A549 (cell line): ENCODE measurements at regions of chr10 and their contacts with region 1.

Region 1: DNA sequence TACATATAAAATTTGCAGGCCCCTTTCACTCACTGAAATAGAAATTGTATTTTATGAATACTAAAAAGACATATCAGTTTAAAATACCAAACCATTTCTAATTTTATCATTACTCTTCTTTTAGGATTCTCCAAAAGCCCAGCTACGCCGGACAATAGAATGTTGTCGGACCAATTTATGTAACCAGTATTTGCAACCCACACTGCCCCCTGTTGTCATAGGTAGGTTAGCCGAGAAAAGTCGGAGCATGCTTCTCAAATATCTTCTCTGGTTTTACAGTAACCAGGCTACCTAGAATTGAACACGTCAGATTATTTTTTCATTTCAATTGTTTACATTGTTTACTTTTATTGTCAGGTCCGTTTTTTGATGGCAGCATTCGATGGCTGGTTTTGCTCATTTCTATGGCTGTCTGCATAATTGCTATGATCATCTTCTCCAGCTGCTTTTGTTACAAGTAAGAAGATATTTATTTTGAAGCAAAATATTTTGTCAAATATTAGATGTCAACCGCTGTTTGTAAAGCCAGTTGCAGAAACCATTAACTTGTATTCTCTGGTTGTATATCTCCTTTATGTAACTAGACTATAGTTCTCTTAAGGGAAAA is 57.6 kb downstream of the MMRN2 start:
- DNase-seq: peak; percentile 59 to 77
- ATAC-seq: peak; percentile 87 to 90
- H3K4me3 ChIP-seq: no peak overlapping the region
- H3K27ac ChIP-seq: no peak overlapping the region
- H3K4me1 ChIP-seq: no peaks in the 10 kb centered on the region
- CTCF ChIP-seq: peak; percentile 82
- EP300 ChIP-seq: no peak
- POLR2A ChIP-seq: no peak
- RAD21 ChIP-seq: peak; percentile 77 to 81

Region 2: DNA sequence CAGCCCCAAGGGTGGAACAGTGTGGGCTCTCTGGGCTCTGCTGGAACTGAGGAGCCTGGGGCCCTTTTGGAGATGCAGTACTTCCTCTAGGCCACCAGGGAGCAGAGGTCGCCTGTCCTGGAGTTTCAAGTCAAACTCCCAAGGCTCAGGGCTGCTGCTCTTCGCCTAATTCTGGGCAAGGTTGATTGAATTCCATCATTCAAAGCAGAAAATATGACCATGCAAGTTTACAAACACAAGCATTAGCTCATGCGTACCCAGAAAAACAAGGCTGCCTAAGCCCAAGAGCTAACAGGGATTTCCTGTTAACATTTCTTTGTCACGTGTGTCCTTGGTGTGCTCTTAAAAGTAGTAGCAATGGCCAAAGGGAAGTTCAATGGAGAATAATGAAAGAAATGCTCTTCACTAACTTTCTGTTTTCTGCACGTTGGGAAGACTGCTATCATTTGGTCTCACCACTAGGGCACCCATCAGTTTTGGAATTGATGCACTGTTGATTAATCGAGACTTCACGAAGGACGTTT is 211.3 kb before region 1 on chr10:
- CTCF ChIA-PET with region 1: interaction called, 37 read pairs
- POLR2A ChIA-PET with region 1: no interaction called
- DNase-seq: peak; percentile 63 to 73
- ATAC-seq: peak; percentile 64 to 82
- H3K4me3 ChIP-seq: no peak overlapping the region
- H3K27ac ChIP-seq: no peak overlapping the region
- H3K4me1 ChIP-seq: no peaks in the 10 kb centered on the region
- CTCF ChIP-seq: peak; percentile 69
- EP300 ChIP-seq: no peak
- POLR2A ChIP-seq: no peak
- RAD21 ChIP-seq: peak; percentile 78 to 85

Region 3: DNA sequence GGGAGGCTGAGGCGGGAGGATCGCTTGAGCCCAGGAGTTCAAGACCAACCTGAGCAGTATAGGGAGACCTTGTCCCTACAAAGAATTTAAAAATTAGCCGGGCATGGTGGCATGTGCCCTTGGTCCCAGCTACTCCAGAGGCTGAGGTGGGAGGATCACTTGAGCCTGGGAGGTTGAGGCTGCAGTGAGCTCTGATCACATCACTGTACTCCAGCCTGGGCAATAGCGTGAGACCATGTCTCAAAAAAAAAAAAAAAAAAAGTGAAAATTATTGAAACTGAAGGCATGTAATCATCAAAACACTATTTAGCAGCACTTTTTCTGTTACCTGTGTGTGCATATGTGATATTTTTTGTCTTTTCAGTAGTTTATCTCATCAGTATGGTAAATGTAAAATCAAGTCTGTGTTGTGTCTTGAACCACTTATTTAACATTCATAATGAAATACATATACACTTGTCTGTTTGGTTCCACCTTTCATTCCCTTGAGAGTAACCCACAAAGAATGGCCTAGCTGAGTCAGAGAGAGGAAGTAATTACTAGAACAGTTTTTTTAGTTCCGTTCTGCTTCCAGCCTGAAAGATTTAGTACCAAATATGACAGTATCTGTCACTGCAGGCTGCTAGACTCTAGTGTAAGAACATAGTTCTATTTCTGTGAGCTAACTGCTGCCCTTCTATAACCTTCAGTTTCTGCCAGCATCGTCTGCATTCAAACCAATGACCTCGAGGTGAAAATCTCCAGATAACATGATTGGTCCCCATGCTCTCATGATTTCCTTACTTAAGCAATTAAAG is 11.0 kb before region 1 on chr10:
- CTCF ChIA-PET with region 1: interaction called, 18 read pairs
- POLR2A ChIA-PET with region 1: no interaction called
- DNase-seq: no peak
- ATAC-seq: no peak
- H3K4me3 ChIP-seq: no peak overlapping the region
- H3K27ac ChIP-seq: no peak overlapping the region
- H3K4me1 ChIP-seq: no peaks in the 10 kb centered on the region
- CTCF ChIP-seq: no peak
- EP300 ChIP-seq: no peak
- POLR2A ChIP-seq: no peak
- RAD21 ChIP-seq: no peak

Region 4: GRCh38 chr10:86956195-86956840 is 56.5 kb after region 1 on chr10:
- CTCF ChIA-PET with region 1: no interaction called
- POLR2A ChIA-PET with region 1: no interaction called
- DNase-seq: no peak
- ATAC-seq: no peak
- H3K4me3 ChIP-seq: no peak overlapping the region
- H3K27ac ChIP-seq: peak overlapping the region in 1 of 2 experiments; percentile 89; a peak in 1 of 6 replicates
- H3K4me1 ChIP-seq: peaks cover 52% of the 10 kb centered on the region
- CTCF ChIP-seq: no peak
- EP300 ChIP-seq: no peak
- POLR2A ChIP-seq: no peak
- RAD21 ChIP-seq: no peak